ENCODE measurements at regions of chr12 and their contacts with region 1.

Region 1: GRCh38 chr12:122471324-122472226 is 29.2 kb downstream of the ZCCHC8 start:
- DNase-seq: no peak
- H3K4me3 ChIP-seq: no peak overlapping the region
- H3K27ac ChIP-seq: peak overlapping the region; percentile 11
- H3K4me1 ChIP-seq: no peaks in the 10 kb centered on the region
- H3K27me3 ChIP-seq: no peaks in the 10 kb centered on the region
- CTCF ChIP-seq: peak; percentile 80

Region 2: DNA sequence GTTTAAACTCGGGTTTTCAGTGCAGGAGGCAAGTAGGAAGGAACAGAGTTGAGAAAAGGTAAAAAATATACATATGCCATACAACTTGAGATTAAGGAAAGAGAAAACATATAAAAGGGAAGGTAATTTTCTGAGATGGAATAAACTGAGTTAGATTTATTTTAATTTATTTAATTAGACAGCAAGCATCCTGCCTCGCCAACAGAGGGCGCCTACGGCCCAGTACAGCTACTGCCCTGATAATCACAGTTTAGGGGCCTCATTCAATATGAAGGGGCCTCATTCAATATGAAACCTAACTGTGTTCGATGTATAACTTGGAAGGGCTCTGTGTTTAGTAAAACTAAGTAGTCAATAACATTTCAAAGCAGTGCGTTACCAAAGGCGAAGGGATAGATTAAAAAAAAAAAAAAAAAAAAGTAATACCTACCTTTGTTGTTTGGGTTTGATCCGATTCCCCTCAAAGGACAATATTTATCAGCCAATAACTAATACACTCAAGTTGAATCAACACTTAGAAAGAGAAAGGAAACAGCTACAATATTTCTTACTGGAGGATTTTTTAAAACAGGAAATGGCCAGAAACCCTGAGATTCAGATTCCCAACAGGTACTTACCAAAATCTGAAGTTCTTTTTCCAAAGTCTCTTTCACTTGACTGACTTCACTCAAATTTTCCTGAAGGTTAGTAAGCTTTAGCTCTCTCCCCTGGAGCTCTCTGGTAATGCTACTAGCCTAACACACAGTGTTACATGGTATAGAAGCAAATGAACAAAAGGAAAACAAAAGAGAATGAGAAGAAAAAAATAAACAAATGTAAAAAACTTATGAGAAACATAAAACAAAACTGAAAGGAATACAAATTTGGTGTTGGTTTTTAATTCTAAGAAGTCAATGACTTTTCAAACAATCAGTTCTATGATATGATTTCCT is 135.3 kb before region 1 on chr12:
- intact Hi-C with region 1: loop called (anchors 10 kb)
- DNase-seq: no peak
- H3K4me3 ChIP-seq: no peak overlapping the region
- H3K27ac ChIP-seq: no peak overlapping the region
- H3K4me1 ChIP-seq: no peaks in the 10 kb centered on the region
- H3K27me3 ChIP-seq: no peaks in the 10 kb centered on the region
- CTCF ChIP-seq: peak; percentile 57

Region 3: DNA sequence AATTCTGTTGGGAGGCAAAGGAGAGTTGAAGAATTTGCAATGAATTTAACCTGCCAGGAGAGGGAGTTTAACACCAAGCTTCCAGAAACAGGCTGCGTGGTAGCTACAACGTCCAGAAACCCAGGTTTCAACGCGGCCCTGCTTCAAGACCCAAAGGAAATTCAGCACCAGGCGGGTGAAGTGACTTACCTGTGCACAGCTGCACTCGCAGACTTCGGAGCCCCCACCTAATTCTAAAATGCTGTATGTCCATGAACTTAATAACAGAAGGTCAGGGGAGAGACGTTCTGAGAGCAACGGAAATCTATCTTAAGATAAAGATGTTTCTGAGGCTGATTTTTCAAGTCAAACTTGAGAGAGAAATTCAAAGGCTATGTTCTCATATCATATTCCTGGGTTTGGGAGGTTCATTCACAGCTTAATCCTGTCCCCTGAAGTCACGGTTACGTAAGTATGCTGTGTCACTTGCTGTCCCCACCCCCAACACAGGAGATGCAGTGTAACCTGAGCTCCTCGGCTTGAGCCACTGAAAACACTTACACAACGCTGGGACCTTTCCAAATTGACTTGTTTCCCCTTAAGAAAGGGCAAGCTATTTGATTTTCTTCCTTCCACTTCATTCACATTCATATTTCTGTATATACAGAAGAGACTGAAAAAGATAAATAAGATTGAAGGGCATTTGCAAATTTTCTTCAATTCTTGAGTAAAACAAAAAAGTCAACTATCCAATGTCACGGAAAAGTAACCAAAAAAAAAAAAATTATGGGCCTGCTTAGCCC is 71.8 kb before region 1 on chr12:
- intact Hi-C with region 1: loop called (anchors 1 kb)
- DNase-seq: peak; percentile 50
- H3K4me3 ChIP-seq: no peak overlapping the region
- H3K27ac ChIP-seq: peak overlapping the region; percentile 80
- H3K4me1 ChIP-seq: no peaks in the 10 kb centered on the region
- H3K27me3 ChIP-seq: no peaks in the 10 kb centered on the region
- CTCF ChIP-seq: peak; percentile 68

Region 4: DNA sequence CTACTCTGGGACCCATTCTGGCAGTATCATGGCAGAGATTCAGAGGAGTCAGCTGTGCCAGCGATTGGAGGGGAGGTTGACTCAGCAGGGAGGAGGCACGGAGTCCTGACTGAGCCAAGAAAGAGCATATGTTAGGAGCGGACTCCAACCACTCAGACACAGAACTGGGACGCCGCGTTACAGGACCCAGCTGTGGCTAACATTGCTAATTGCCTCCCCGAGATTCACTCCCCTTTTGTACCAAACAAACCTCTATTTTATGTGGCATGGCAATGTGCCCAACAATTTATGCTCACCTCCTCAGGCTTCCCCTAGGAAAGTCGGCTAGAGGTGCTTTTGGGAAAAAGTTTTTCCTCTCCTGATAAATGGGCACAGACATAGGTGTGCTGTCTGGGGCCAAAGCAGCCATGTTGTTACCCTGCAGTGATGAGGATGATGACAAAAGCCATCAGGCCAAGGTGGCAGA is 33.9 kb before region 1 on chr12:
- intact Hi-C with region 1: no loop called
- DNase-seq: peak; percentile 47
- H3K4me3 ChIP-seq: no peak overlapping the region
- H3K27ac ChIP-seq: no peak overlapping the region
- H3K4me1 ChIP-seq: no peaks in the 10 kb centered on the region
- H3K27me3 ChIP-seq: no peaks in the 10 kb centered on the region
- CTCF ChIP-seq: no peak

Region 5: GRCh38 chr12:122888232-122888867 is 416.8 kb after region 1 on chr12:
- intact Hi-C with region 1: no loop called
- DNase-seq: peak; percentile 74
- H3K4me3 ChIP-seq: peak overlapping the region; percentile 18
- H3K27ac ChIP-seq: peak overlapping the region; percentile 88
- H3K4me1 ChIP-seq: peaks cover 26% of the 10 kb centered on the region
- H3K27me3 ChIP-seq: no peaks in the 10 kb centered on the region
- CTCF ChIP-seq: no peak

Region 6: GRCh38 chr12:122974274-122974891 is 502.8 kb after region 1 on chr12:
- intact Hi-C with region 1: no loop called
- DNase-seq: peak; percentile 100
- H3K4me3 ChIP-seq: peak overlapping the region; percentile 82
- H3K27ac ChIP-seq: peak overlapping the region; percentile 98
- H3K4me1 ChIP-seq: peaks cover 18% of the 10 kb centered on the region
- H3K27me3 ChIP-seq: no peaks in the 10 kb centered on the region
- CTCF ChIP-seq: no peak